AG04449 (cell line): ENCODE measurements at regions of chr2 and their contacts with region 1.

Region 1: DNA sequence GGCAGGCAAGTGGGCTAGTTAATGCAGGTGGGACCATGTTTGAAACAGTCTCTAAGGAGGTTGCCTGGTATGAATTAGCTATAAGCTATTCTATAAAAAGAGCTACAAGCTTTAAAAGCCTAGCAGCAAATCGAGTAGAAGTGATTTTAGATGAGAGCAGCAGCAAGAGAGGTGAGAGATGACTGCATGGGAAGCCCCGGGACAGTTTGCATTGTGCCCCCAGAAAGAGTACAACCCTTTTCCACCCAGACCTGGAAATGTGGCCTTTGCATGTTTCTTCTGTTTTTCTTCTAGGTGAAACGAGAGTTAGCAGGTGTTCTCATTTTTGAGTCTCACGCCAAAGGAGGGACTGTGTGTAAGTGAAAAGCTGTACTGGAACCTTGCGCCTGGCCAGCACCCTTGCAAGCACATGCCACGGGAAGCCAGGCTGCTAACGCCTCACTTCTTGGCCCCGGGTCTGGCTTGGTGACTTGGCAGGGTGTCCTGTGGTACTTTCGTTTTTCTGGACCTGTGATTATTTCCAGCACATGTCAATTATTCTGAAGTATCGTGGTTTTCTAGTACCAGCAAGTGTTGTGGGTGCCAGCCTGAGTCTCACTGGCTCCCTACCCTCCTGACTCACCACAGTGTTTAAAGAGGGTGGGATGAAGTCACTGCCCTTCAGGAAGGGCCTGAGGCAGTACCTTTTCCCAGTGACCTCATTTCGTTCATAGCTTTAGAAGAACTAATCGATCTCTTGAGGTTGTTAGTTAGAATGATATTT is 90.3 kb upstream of the MAP3K20 start:
- DNase-seq: no peak
- H3K4me3 ChIP-seq: no peak overlapping the region
- CTCF ChIP-seq: no peak

Region 2: DNA sequence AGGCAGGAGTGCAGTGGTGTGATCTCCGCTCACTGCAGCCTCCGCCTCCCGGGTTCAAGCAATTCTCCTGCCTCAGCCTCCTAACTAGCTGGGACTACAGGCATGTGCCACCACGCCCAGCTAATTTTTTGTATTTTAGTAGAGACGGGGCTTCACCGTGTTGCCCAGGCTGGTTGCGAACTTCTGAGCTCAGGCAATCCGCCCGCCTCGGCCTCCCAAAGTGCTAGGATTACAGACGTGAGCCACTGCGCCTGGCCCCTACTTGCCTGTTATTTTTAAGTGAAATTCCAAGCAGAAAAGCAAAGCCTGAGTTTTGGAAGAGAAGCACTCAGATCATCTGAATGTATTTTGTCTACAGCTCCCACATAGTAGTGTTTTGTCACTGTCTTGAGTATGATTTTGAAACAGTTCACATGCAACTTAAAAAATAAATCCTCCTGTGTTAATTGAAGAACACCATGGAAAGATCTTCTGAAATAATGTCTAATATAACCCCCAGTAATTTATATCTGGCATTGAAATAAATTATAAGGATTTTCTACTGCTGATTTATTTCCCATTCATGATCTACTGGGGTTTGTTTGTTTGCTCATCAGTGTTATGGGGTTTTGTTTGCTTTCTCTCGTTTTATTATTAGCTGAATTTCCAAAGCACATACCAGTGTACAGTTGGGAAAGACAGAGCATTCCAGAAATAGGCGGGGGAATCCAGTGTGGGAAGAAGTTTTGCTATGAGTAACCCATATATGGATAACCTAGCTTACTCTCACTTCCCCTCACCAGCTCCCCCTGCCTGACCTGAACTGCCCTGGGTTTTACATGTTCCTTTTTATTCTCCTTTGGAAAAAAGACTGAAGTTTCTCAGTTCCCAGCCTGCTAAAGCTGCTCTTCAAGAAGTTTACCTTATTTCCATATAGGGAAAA is 10.3 kb after region 1 on chr2:
- CTCF ChIA-PET with region 1: interaction called, 24 read pairs
- POLR2A ChIA-PET with region 1: no interaction called
- DNase-seq: peak; percentile 92
- H3K4me3 ChIP-seq: no peak overlapping the region
- CTCF ChIP-seq: peak; percentile 54